ENCODE measurements at regions of chr9 and their contacts with region 1.

Region 1: DNA sequence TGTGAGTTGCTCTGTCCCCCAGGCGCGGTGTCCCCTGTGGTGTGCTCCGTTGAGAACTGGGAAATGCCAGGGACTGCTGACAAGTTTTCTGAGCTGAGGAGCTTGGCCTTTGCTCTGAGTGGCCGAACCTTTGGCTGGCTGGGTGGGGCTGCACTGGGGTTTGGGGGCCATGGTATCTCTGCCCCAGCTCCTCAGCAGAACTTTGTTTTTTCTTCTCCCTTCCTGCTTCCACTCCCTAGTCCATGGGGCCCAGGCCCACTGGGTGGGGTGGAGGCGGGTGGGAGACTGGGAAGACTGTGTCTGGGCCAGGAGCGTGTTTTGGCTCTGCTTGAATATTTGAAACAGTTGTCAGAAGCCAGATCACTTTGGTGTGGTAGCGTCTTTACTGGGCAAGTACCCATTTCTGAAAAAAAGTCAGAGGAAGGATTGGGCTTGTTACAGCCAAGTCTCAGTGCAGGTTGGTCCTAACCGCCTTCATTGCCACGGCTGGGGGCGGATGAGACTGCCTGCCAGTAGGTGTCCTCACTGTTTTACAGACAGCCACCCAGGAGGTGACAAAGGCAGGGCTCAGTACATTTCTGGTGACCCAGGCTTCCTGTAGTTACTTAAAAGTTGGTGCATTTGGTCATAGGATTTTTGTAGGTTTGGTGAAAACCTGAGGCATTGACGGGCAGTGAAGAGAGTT is 92.7 kb downstream of the DAB2IP start:
- DNase-seq: peak; percentile 62 to 90
- ATAC-seq: peak; percentile 75 to 81
- H3K4me3 ChIP-seq: peak overlapping the region; percentile 55
- H3K27ac ChIP-seq: peak overlapping the region; percentile 72 to 85
- H3K4me1 ChIP-seq: peaks cover 27% of the 10 kb centered on the region
- CTCF ChIP-seq: peak; percentile 71
- EP300 ChIP-seq: no peak
- POLR2A ChIP-seq: no peak
- RAD21 ChIP-seq: peak; percentile 74 to 81

Region 2: GRCh38 chr9:121992571-121993212 is 248.5 kb after region 1 on chr9:
- CTCF ChIA-PET with region 1: interaction called, 20 read pairs
- POLR2A ChIA-PET with region 1: no interaction called
- DNase-seq: peak; percentile 69 to 74
- ATAC-seq: peak; percentile 90 to 92
- H3K4me3 ChIP-seq: no peak overlapping the region
- H3K27ac ChIP-seq: no peak overlapping the region
- H3K4me1 ChIP-seq: no peaks in the 10 kb centered on the region
- CTCF ChIP-seq: peak; percentile 89
- EP300 ChIP-seq: no peak
- POLR2A ChIP-seq: no peak
- RAD21 ChIP-seq: peak; percentile 85 to 91

Measured in A549 (cell line).